HepG2 (cell line): ENCODE measurements at regions of chr3 and their contacts with region 1.

Region 1: GRCh38 chr3:191388823-191389222 is 58.5 kb upstream of the UTS2B start:
- DNase-seq: no peak
- ATAC-seq: no peak
- H3K4me3 ChIP-seq: no peak overlapping the region
- H3K27ac ChIP-seq: no peak overlapping the region
- H3K4me1 ChIP-seq: no peaks in the 10 kb centered on the region
- H3K27me3 ChIP-seq: no peaks in the 10 kb centered on the region
- CTCF ChIP-seq: no peak
- EP300 ChIP-seq: no peak
- POLR2A ChIP-seq: no peak
- RAD21 ChIP-seq: no peak

Region 2: GRCh38 chr3:190996181-190996775 is 392.5 kb before region 1 on chr3:
- CTCF ChIA-PET with region 1: no interaction called
- POLR2A ChIA-PET with region 1: no interaction called
- in situ Hi-C with region 1: no loop called
- intact Hi-C with region 1: no loop called
- DNase-seq: no peak
- ATAC-seq: no peak
- H3K4me3 ChIP-seq: no peak overlapping the region
- H3K27ac ChIP-seq: no peak overlapping the region
- H3K4me1 ChIP-seq: no peaks in the 10 kb centered on the region
- H3K27me3 ChIP-seq: no peaks in the 10 kb centered on the region
- CTCF ChIP-seq: no peak
- EP300 ChIP-seq: no peak
- POLR2A ChIP-seq: no peak
- RAD21 ChIP-seq: no peak

Region 3: DNA sequence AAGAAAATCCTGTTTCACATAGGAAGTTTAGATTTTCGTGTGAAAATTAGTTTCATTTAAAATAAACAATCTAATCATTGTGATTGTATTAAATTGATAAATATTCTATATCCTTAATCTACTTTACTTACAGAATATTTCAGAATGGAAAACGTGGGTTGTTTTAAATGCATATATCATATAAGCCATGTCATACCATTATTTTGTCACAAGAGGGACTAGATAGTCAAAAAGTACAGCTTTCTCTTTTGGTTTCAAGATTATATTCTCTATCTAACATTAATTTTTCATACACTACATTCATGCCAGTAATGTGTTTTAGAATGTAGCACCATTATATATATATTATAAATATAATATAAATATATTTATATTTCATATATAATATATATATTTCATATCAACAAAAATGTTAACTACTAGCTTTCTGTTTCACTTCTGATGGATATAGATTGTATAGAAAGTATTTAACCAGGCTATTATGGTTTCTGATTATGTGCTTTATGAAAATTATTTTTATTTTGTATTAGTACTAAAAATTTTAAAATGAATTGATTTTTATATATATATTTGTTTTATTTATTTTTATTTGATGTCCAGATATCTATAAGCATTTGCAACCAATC is 144.5 kb before region 1 on chr3:
- CTCF ChIA-PET with region 1: no interaction called
- POLR2A ChIA-PET with region 1: no interaction called
- in situ Hi-C with region 1: no loop called
- intact Hi-C with region 1: loop called (anchors 2 kb)
- DNase-seq: peak; percentile 6
- ATAC-seq: no peak
- H3K4me3 ChIP-seq: no peak overlapping the region
- H3K27ac ChIP-seq: no peak overlapping the region
- H3K4me1 ChIP-seq: no peaks in the 10 kb centered on the region
- H3K27me3 ChIP-seq: no peaks in the 10 kb centered on the region; a peak in 1 of 5 replicates
- CTCF ChIP-seq: peak; percentile 15; the same call in 1 of the 2 replicates
- EP300 ChIP-seq: no peak
- POLR2A ChIP-seq: no peak
- RAD21 ChIP-seq: no peak

Region 4: DNA sequence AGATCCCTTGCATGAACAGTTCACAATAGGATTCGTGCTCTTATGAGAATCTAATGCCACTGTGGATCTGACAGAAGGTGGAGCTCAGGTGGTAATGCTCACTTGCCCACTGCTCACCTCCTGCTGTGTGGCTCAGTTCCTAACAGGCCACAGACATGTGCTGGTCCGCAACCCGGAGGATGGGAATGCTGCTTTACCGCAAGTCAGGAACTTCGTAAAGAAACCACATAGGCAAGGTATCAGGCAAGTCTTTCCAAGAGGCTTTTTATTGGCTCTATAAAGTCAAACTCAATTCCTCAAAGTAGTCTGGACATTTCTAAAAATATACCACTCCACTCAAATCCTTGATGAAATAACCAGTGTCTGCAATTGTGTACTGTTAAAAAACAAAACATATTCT is 133.7 kb before region 1 on chr3:
- CTCF ChIA-PET with region 1: no interaction called
- POLR2A ChIA-PET with region 1: no interaction called
- in situ Hi-C with region 1: no loop called
- intact Hi-C with region 1: no loop called
- DNase-seq: no peak
- ATAC-seq: no peak
- H3K4me3 ChIP-seq: no peak overlapping the region
- H3K27ac ChIP-seq: no peak overlapping the region
- H3K4me1 ChIP-seq: no peaks in the 10 kb centered on the region
- H3K27me3 ChIP-seq: no peaks in the 10 kb centered on the region; a peak in 1 of 5 replicates
- CTCF ChIP-seq: no peak
- EP300 ChIP-seq: no peak
- POLR2A ChIP-seq: no peak
- RAD21 ChIP-seq: no peak

Region 5: GRCh38 chr3:191269289-191270085 is 119.3 kb before region 1 on chr3:
- CTCF ChIA-PET with region 1: no interaction called
- POLR2A ChIA-PET with region 1: no interaction called
- in situ Hi-C with region 1: no loop called
- intact Hi-C with region 1: no loop called
- DNase-seq: no peak
- ATAC-seq: no peak
- H3K4me3 ChIP-seq: no peak overlapping the region
- H3K27ac ChIP-seq: no peak overlapping the region
- H3K4me1 ChIP-seq: no peaks in the 10 kb centered on the region
- H3K27me3 ChIP-seq: no peaks in the 10 kb centered on the region
- CTCF ChIP-seq: no peak
- EP300 ChIP-seq: no peak
- POLR2A ChIP-seq: no peak
- RAD21 ChIP-seq: no peak

Region 6: DNA sequence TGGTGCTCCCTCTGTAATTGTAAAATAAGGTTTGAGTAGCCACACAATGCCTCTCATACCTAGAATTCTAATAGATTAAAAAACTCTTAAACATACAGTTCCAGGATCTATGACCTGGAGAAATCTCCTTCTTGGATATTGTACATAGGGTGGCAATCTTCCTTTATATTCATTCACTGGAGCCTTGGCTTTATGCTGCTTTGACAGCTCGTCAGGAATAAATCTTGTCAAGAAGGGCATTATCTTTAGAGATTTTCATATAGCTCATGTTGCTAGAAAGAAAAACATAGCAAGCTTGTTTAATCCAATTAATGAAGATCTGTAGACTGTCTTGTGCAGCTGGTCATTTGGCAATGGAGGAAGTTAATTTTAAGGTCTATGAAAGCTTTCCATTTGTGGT is 203.3 kb after region 1 on chr3:
- CTCF ChIA-PET with region 1: no interaction called
- POLR2A ChIA-PET with region 1: no interaction called
- in situ Hi-C with region 1: no loop called
- intact Hi-C with region 1: no loop called
- DNase-seq: no peak
- ATAC-seq: no peak
- H3K4me3 ChIP-seq: no peak overlapping the region
- H3K27ac ChIP-seq: no peak overlapping the region
- H3K4me1 ChIP-seq: no peaks in the 10 kb centered on the region
- H3K27me3 ChIP-seq: no peaks in the 10 kb centered on the region
- CTCF ChIP-seq: no peak
- EP300 ChIP-seq: no peak
- POLR2A ChIP-seq: no peak
- RAD21 ChIP-seq: no peak